PC-3 (cell line): ENCODE measurements at regions of chrX and their contacts with region 1.

Region 1: GRCh38 chrX:107731831-107732502 is 43.6 kb downstream of the TSC22D3 start:
- DNase-seq: peak; percentile 84
- ATAC-seq: peak; percentile 68
- H3K4me3 ChIP-seq: no peak overlapping the region
- H3K27ac ChIP-seq: peak overlapping the region; percentile 30
- H3K4me1 ChIP-seq: peaks cover 46% of the 10 kb centered on the region
- H3K27me3 ChIP-seq: no peaks in the 10 kb centered on the region
- CTCF ChIP-seq: no peak

Region 2: DNA sequence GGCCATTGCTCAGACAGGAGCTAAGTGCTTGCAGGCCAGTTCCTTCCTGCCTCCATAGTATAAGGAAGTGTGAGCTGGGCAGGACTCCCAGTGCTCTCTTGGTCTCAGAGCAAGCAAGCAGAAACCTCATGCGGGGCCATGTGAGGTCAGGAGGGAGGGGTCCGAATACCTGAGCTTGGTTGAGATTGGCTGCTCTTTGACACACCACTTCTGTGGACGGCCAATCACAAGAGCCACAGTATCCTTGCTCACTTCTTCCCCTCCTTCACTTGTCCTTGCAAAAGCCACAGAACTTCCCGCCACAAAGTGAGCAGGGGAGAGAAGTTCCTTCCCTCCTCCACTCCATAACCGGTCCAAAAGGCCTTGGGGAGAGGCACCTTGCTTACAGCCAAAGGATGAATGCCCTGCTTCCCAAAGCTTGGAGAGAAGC is 47.0 kb before region 1 on chrX:
- CTCF ChIA-PET with region 1: no interaction called
- POLR2A ChIA-PET with region 1: no interaction called
- intact Hi-C with region 1: no loop called
- DNase-seq: no peak
- ATAC-seq: no peak
- H3K4me3 ChIP-seq: no peak overlapping the region
- H3K27ac ChIP-seq: no peak overlapping the region
- H3K4me1 ChIP-seq: peaks cover 11% of the 10 kb centered on the region
- H3K27me3 ChIP-seq: no peaks in the 10 kb centered on the region
- CTCF ChIP-seq: no peak

Region 3: GRCh38 chrX:107701493-107702121 is 30.4 kb before region 1 on chrX:
- CTCF ChIA-PET with region 1: interaction called, 25 read pairs
- POLR2A ChIA-PET with region 1: no interaction called
- intact Hi-C with region 1: no loop called
- DNase-seq: no peak
- ATAC-seq: no peak
- H3K4me3 ChIP-seq: no peak overlapping the region
- H3K27ac ChIP-seq: no peak overlapping the region
- H3K4me1 ChIP-seq: peaks cover 9% of the 10 kb centered on the region; the same call in 1 of the 2 replicates
- H3K27me3 ChIP-seq: no peaks in the 10 kb centered on the region
- CTCF ChIP-seq: no peak